Sigmoid colon (tissue), 7 donors: ENCODE measurements at regions of chr15 and their contacts with region 1.

Region 1: GRCh38 chr15:38252481-38253412 is at the start of gene SPRED1:
- DNase-seq: peak; percentile 90
- H3K4me3 ChIP-seq: peak within 1 kb of the TSS; percentile 89 to 98 (median 93)
- H3K27ac ChIP-seq: peak within 1 kb of the TSS; percentile 98 to 100 (median 99)
- H3K4me1 ChIP-seq: peaks cover 0 to 36% (median 19%) of the 10 kb centered on the region in 4 donors
- H3K27me3 ChIP-seq: no peaks in the 10 kb centered on the region
- CTCF ChIP-seq: no peak
- EP300 ChIP-seq: no peak
- POLR2A ChIP-seq: no peak
- total RNA-seq, gene SPRED1: 13.3 to 17.8 (median 15.1) TPM

Region 2: DNA sequence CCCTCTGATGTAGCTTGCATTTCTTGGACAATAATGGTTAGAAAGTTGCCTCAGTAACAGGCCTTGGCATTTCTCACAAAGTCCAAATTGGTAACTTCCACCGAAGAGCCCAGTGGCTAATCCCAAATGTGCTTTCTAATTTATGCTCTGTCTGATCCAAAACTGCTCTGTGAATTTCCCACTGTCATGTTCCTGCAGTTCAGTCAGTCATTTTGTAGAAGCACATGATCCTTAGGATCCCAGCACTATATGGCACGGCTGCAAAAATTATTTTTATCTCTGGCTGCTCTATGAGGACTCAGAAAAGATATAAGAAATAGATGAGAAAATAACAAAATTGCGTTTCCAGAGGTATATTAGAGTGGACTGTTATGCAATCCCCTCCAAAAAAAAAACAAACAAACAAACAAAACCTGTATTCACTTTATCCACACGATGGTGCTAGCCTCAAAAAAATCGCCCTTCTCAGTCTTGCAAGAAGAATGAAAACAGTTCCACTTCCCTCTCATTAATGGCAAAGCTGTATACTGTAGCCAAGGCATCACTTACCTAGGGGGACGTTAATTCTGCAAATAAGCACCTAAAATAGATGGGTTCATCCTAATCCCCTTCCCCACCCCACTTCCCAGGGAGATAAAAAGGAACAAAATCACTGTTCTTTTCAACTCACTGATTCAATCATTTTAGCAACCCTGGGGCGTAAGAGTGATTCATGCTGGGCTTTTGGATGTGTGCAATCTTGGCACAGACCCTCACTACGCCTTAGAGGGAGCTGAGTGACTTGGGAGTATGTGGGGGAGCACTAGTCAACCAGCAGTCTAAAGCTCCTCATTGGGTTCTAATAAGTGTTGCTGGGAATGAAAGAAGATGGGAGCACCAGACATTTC is 257.0 kb before region 1 on chr15:
- intact Hi-C with region 1: loop called (anchors 5 kb)
- DNase-seq: no peak
- H3K4me3 ChIP-seq: no peak overlapping the region
- H3K27ac ChIP-seq: no peak overlapping the region
- H3K4me1 ChIP-seq: no peaks in the 10 kb centered on the region
- H3K27me3 ChIP-seq: no peaks in the 10 kb centered on the region
- CTCF ChIP-seq: peak in 3 of 4 experiments; percentile 21 to 40 (median 29)
- EP300 ChIP-seq: no peak
- POLR2A ChIP-seq: no peak

Region 3: DNA sequence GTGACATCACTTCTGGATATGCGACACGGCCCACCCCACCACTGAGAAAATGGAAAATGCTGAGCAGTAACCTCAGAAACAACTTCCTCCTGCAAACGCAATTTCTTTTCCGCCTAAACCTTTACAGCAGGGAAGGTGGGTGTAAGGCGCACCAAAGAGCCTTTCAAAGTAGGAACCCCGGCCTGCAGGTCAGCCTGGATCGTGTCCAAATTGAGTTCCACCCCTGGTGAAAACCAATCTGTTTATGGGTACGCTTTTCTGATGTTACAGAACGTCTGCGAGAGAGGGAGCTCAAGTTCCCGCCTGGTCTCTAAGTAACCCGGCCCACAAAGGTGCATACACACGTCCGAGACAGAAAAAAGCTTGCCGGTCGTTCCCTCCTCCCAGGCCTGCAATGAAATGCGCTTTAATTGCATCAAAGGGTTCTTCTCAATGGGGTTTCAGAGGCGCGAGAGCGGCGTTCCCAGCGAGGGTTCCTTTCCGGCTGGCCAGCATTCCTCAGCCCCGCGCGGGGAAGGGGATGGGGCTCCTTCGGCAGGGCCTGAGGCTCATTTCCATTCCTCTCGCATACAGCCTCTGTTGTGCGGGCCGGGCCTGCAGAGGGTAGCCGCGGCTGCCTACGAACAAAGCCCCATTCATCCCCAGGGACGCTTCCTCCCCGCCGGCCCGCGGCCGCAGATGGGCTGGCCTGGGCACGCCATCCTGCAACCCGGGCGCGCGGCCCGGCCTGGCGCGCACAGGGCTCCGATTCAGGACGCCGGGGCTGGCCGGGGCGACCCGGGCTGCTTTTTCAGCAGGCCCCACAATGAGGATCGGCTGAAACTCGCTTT is 180.2 kb before region 1 on chr15:
- intact Hi-C with region 1: loop called (anchors 1 kb)
- DNase-seq: peak; percentile 84
- H3K4me3 ChIP-seq: peak overlapping the region; percentile 36 to 64 (median 56)
- H3K27ac ChIP-seq: peak overlapping the region; percentile 81 to 87 (median 84)
- H3K4me1 ChIP-seq: peaks cover 0 to 29% (median 15%) of the 10 kb centered on the region in 4 donors
- H3K27me3 ChIP-seq: no peaks in the 10 kb centered on the region
- CTCF ChIP-seq: no peak
- EP300 ChIP-seq: no peak
- POLR2A ChIP-seq: no peak

Region 4: DNA sequence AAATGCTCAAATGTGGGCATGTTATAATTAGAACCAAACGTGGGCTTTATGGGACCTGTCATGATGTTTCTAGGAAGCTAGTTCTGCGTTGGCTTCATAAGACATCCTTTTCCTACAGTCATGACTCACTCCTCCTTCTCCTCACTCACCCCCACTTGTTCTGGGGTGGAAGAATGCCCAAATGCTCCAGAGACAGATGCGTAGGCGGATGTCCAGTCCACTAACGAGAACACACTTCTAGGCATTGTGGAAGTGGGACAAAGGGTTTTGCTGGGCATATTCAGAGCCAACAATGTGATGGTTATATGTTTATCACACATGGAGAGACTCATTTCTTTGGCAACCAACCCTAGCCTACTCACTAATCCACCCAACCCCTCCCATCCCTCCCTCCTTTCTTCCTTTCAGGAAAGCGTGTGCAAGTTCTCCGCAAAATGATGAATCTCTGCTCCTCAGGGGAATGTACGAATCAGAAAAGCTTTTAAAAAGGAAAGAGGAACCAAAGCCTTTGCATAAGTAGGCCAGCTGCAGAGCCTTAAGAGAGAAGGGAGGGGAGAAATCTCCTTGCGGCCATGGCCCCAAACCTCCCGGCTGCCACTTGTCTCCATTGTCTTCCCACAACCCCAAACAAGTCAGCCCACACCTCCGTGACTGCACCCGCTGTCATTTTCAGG is 123.1 kb before region 1 on chr15:
- intact Hi-C with region 1: loop called (anchors 2 kb)
- DNase-seq: peak; percentile 95
- H3K4me3 ChIP-seq: peak overlapping the region in 3 of 4 donors; percentile 18 to 26 (median 25)
- H3K27ac ChIP-seq: peak overlapping the region; percentile 72 to 85 (median 80)
- H3K4me1 ChIP-seq: peaks cover 0 to 29% (median 17%) of the 10 kb centered on the region in 4 donors
- H3K27me3 ChIP-seq: no peaks in the 10 kb centered on the region
- CTCF ChIP-seq: no peak
- EP300 ChIP-seq: peak in 2 of 4 donors; percentile 12 to 65
- POLR2A ChIP-seq: no peak

Region 5: DNA sequence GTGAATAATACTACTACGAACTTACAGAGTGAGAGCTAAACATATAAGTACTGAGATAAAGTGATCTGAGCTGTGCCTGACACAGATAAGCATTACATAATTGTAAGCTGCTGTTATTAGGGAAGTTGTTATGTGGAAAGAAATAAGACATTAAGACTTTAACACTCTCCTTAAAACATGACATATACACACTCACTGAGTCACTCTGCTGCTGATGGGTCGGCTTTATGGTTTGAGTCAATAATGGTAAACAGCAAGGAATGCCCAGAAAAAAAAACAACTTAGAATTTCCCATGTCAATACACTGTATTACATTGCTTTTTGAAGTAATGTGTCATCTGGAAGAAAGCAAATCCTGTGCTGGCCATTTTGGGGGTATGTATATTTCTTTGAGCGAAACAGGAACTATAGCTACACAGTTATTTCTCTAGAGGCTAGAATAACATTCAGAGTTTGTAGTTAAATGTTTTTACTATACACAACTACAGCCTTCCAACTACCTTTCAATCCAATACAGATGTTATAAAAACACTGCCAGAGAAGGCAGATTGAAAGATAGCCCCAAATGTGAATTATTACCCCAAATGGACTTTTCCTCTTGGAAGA is 22.9 kb before region 1 on chr15:
- intact Hi-C with region 1: no loop called
- DNase-seq: no peak
- H3K4me3 ChIP-seq: no peak overlapping the region
- H3K27ac ChIP-seq: no peak overlapping the region
- H3K4me1 ChIP-seq: no peaks in the 10 kb centered on the region
- H3K27me3 ChIP-seq: no peaks in the 10 kb centered on the region
- CTCF ChIP-seq: no peak
- EP300 ChIP-seq: no peak
- POLR2A ChIP-seq: no peak

Region 6: DNA sequence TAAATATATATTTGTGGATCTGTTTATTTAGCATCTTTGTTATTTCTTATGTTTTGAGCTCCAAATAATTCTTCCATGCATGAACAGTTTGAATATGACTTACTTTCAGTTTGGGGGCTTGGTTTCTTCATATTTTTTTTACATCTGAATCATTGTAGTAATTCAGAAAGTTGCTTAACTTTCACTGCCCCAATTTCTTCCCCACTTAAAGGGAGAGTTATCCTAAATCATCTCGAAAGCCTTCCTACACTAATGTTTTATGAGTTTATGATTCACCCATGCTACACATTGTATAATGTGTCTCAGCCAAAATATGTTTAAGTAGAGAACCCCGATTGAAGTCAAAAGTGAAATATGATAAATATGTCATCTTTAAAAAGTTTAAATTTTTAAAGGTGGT is 47.6 kb after region 1 on chr15:
- intact Hi-C with region 1: loop called (anchors 5 kb)
- DNase-seq: no peak
- H3K4me3 ChIP-seq: no peak overlapping the region
- H3K27ac ChIP-seq: peak overlapping the region in 1 of 4 donors; percentile 9
- H3K4me1 ChIP-seq: peaks cover 0 to 26% (median 9%) of the 10 kb centered on the region in 4 donors
- H3K27me3 ChIP-seq: no peaks in the 10 kb centered on the region
- CTCF ChIP-seq: no peak
- EP300 ChIP-seq: no peak
- POLR2A ChIP-seq: no peak

Region 7: DNA sequence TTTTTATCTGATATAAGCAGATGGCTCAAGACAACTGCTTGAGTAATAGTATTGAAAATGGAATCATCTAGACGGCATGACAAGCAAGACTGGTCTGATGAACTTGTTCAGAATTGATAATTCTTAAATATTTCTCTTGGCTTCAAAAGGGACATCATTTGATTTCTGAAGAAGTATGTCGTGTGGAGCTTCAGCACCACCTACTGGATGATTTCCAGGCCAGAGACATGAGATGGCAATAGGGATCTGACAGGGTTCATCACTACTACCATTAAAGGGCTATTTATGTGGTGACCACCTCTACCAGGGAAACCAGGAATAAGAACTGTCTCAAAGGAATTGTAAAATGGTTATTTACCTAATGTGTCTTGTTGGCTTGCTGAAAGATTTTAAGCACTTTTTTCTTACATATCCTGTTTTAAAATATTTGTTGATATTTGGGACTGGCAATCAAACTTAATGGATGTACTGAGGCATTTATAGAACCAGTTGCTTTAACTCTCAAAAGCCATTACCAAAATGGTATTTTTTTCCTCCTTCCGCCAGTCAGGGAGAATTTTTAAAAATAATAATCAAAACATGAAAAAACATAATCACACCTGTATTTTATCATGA is 101.7 kb after region 1 on chr15:
- intact Hi-C with region 1: loop called (anchors 5 kb)
- DNase-seq: no peak
- H3K4me3 ChIP-seq: no peak overlapping the region
- H3K27ac ChIP-seq: no peak overlapping the region
- H3K4me1 ChIP-seq: no peaks in the 10 kb centered on the region
- H3K27me3 ChIP-seq: no peaks in the 10 kb centered on the region
- CTCF ChIP-seq: peak; percentile 18 to 72 (median 50)
- EP300 ChIP-seq: no peak
- POLR2A ChIP-seq: no peak

Region 8: DNA sequence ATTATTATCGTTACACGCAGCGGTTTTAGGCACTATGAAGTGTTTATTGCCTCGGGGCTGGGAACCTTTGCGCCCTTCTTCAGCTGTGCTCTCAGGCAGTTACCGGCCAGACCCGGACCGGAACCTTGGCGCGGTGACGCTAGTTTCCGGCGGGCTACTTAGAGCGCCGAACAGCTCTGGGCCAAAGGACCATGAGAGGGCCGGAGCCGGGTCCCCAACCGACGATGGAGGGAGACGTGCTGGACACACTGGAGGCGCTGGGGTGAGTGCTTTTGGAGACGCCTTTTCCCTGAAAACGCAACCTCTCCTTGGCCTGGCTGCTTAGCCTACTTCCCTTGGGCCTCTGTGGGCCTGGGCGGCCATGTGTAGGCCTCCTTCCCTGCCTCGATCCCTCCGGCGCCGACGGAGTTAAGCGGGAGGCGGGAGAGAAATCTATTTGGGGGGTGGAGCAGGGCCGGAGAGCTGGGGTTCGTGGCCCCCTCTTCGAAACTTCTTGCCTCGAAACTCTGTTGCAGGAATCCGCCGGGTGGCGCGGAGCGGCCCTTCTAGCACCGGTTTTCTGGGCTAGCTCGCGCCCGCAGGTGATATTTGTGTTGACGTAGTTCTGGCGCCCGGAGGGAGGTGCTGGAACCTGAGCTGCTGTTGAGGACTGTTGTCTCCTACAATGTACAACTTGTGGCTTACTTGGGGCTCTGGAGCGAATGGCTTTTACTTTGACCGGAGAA is 201.4 kb after region 1 on chr15 and contains the start of gene FAM98B:
- intact Hi-C with region 1: loop called (anchors 5 kb)
- DNase-seq: peak; percentile 93
- H3K4me3 ChIP-seq: peak within 1 kb of the TSS; percentile 68 to 83 (median 72)
- H3K27ac ChIP-seq: peak within 1 kb of the TSS; percentile 91 to 94 (median 93)
- H3K4me1 ChIP-seq: peaks cover 0 to 22% (median 12%) of the 10 kb centered on the region in 4 donors
- H3K27me3 ChIP-seq: no peaks in the 10 kb centered on the region
- CTCF ChIP-seq: peak in 1 of 4 experiments; percentile 10
- EP300 ChIP-seq: peak in 1 of 4 donors; percentile 20
- POLR2A ChIP-seq: no peak
- total RNA-seq, gene FAM98B: 12.1 to 16.6 (median 13.8) TPM